Activated CD4-positive, alpha-beta T cell treated with anti-CD3 and anti-CD28 coated beads for 36 hours (primary cell): ENCODE measurements at regions of chr1 and their contacts with region 1.

Region 1: DNA sequence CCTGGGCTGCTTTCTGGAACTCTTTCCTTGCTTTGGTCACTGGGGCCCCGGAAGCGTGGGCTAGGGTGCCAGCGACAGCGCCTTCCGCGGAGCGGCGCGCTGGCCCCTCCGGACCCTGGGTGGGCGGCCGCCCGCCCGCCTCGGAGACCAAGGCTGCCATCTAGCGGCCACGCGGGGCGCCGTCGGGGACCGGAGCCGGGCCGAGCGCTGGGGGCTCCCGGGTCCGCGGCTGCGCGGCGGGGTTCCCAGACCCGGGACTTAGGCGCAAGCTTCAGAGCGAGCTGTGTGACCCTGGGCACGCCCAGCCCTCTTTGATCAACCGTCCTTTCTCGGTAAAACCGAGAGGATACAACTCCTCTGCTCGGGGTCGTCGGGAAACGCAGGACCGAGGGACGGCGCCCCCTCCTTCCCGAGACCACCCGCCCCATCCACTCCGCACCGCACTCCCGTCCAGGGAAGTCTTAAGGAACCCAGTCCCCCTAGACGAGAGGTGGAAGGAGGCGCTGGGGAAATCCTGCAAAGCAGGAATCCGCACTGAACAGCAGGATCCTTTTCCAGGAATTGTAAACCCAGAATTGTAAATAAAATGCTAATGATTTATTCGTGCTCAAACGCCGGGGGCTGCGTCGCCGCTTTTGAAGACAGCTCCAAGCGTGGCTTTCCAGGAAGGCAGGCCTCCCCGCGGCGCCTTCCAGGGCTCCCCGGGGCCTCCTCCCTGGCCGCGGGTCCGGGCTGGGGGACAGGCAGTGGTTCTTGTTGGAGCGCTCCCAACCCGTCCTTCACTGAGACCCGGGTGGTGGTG is 41.2 kb downstream of the RRAGC start:
- DNase-seq: peak; percentile 70
- ATAC-seq: peak; percentile 60
- H3K4me3 Mint-ChIP-seq: no peak overlapping the region
- H3K27ac Mint-ChIP-seq: no peak overlapping the region
- H3K4me1 Mint-ChIP-seq: peaks cover 10% of the 10 kb centered on the region
- H3K27me3 Mint-ChIP-seq: peaks cover 53% of the 10 kb centered on the region

Region 2: GRCh38 chr1:38046884-38047602 is 771.3 kb before region 1 on chr1:
- CTCF ChIA-PET with region 1: no interaction called
- POLR2A ChIA-PET with region 1: no interaction called
- intact Hi-C with region 1: loop called in 1 of 2 experiments (anchors 5 kb)
- DNase-seq: peak; percentile 82
- ATAC-seq: peak; percentile 87
- H3K4me3 Mint-ChIP-seq: peak overlapping the region; percentile 64
- H3K27ac Mint-ChIP-seq: no peak overlapping the region
- H3K4me1 Mint-ChIP-seq: peaks cover 11% of the 10 kb centered on the region
- H3K27me3 Mint-ChIP-seq: peaks cover 41% of the 10 kb centered on the region

Region 3: DNA sequence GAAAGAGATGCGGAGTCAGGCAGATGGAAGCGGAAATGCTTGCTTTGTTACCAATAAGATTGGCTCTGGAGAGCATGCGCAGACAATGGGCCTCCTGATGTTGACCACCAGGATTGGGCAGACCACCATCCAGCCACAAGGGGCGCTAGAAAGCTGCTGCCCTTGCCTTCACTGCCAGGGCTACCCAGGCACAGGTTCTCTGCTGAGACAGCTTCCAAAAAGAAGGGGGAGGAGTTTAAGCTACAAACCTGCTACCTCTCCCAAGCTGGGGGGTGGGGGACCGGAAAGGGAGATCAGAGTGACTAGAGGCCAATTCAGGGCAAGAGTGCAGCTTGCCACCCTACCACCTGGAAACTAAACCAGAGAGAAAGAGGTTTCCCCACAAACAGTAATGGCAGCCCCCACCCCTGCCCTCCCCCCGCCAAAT is 328.5 kb before region 1 on chr1:
- CTCF ChIA-PET with region 1: no interaction called
- POLR2A ChIA-PET with region 1: no interaction called
- intact Hi-C with region 1: loop called in 1 of 2 experiments (anchors 5 kb)
- DNase-seq: peak; percentile 75
- ATAC-seq: peak; percentile 84
- H3K4me3 Mint-ChIP-seq: no peak overlapping the region
- H3K27ac Mint-ChIP-seq: no peak overlapping the region
- H3K4me1 Mint-ChIP-seq: peaks cover 4% of the 10 kb centered on the region
- H3K27me3 Mint-ChIP-seq: peaks cover 14% of the 10 kb centered on the region

Region 4: GRCh38 chr1:38608202-38608864 is 210.0 kb before region 1 on chr1:
- CTCF ChIA-PET with region 1: interaction called, 3 read pairs
- POLR2A ChIA-PET with region 1: no interaction called
- intact Hi-C with region 1: loop called (anchors 2 to 5 kb)
- DNase-seq: peak; percentile 47
- ATAC-seq: peak; percentile 30
- H3K4me3 Mint-ChIP-seq: no peak overlapping the region
- H3K27ac Mint-ChIP-seq: no peak overlapping the region
- H3K4me1 Mint-ChIP-seq: no peaks in the 10 kb centered on the region
- H3K27me3 Mint-ChIP-seq: peaks cover 1% of the 10 kb centered on the region

Region 5: GRCh38 chr1:40107290-40108262 is 1289.2 kb after region 1 on chr1:
- CTCF ChIA-PET with region 1: no interaction called
- POLR2A ChIA-PET with region 1: no interaction called
- intact Hi-C with region 1: no loop called
- DNase-seq: no peak
- ATAC-seq: no peak
- H3K4me3 Mint-ChIP-seq: no peak overlapping the region
- H3K27ac Mint-ChIP-seq: no peak overlapping the region
- H3K4me1 Mint-ChIP-seq: peaks cover 3% of the 10 kb centered on the region
- H3K27me3 Mint-ChIP-seq: peaks cover 13% of the 10 kb centered on the region